Endothelial cell of umbilical vein (primary cell): ENCODE measurements at regions of chr2 and their contacts with region 1.

Region 1: GRCh38 chr2:30711646-30712085 is 95.6 kb downstream of the CAPN13 start:
- DNase-seq: peak; percentile 88
- H3K4me3 ChIP-seq: no peak overlapping the region
- H3K27ac ChIP-seq: no peak overlapping the region
- H3K4me1 ChIP-seq: no peaks in the 10 kb centered on the region
- H3K27me3 ChIP-seq: no peaks in the 10 kb centered on the region
- CTCF ChIP-seq: peak; percentile 99 to 100
- POLR2A ChIP-seq: no peak

Region 2: DNA sequence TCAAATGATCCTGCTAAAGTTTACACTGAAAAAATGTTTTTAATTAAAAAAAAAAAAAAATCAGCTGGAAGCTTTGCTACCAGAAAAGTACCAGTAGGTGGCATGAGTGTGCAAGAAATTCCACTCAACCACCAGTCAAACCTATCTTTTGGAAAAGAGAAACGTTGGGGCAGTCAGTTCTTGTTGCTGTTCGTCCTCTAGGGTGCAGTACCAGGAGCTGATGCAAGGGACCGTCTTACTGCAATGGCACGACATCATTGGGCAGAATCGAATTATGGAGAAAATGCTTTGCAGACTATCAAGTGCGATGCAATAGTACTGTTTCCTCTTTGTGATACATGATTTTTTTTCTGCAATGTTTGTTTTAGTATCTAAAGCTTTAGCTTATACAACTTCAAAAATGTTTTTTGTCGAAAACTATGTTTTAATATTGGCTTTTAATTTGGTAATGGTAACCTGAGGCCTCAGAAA is 546.6 kb before region 1 on chr2:
- CTCF ChIA-PET with region 1: interaction called, 542 read pairs
- POLR2A ChIA-PET with region 1: interaction called, 6 read pairs
- dilution Hi-C with region 1: no loop called
- intact Hi-C with region 1: loop called (anchors 1 kb)
- DNase-seq: peak; percentile 87
- H3K4me3 ChIP-seq: no peak overlapping the region
- H3K27ac ChIP-seq: no peak overlapping the region
- H3K4me1 ChIP-seq: no peaks in the 10 kb centered on the region
- H3K27me3 ChIP-seq: peaks cover 0 to 1% of the 10 kb centered on the region in 2 experiments
- CTCF ChIP-seq: peak; percentile 75 to 82
- POLR2A ChIP-seq: no peak

Region 3: GRCh38 chr2:30231212-30231995 is 480.3 kb before region 1 on chr2 and contains the start of gene LBH:
- CTCF ChIA-PET with region 1: interaction called, 11 read pairs
- POLR2A ChIA-PET with region 1: no interaction called
- dilution Hi-C with region 1: no loop called
- intact Hi-C with region 1: no loop called
- DNase-seq: peak; percentile 72
- H3K4me3 ChIP-seq: peak within 1 kb of the TSS; percentile 51 to 58 (median 53)
- H3K27ac ChIP-seq: no peak within 1 kb of the TSS
- H3K4me1 ChIP-seq: peaks cover 9% of the 10 kb centered on the region
- H3K27me3 ChIP-seq: peaks cover 21 to 22% of the 10 kb centered on the region in 2 experiments
- CTCF ChIP-seq: peak in 1 of 2 donors; percentile 3
- POLR2A ChIP-seq: peak; percentile 86
- total RNA-seq, gene LBH: 2.9 and 5.5 TPM in 2 replicates

Region 4: GRCh38 chr2:30721668-30722647 is 10.3 kb after region 1 on chr2:
- CTCF ChIA-PET with region 1: interaction called, 18 read pairs
- POLR2A ChIA-PET with region 1: no interaction called
- dilution Hi-C with region 1: no loop called
- intact Hi-C with region 1: no loop called
- DNase-seq: no peak
- H3K4me3 ChIP-seq: no peak overlapping the region
- H3K27ac ChIP-seq: no peak overlapping the region
- H3K4me1 ChIP-seq: no peaks in the 10 kb centered on the region
- H3K27me3 ChIP-seq: no peaks in the 10 kb centered on the region
- CTCF ChIP-seq: no peak
- POLR2A ChIP-seq: no peak

Region 5: GRCh38 chr2:31233741-31234682 is 522.3 kb after region 1 on chr2 and contains the start of gene EHD3:
- CTCF ChIA-PET with region 1: interaction called, 3 read pairs
- POLR2A ChIA-PET with region 1: no interaction called
- dilution Hi-C with region 1: no loop called
- intact Hi-C with region 1: loop called (anchors 5 kb)
- DNase-seq: peak; percentile 82
- H3K4me3 ChIP-seq: peak within 1 kb of the TSS; percentile 3 to 62 (median 40)
- H3K27ac ChIP-seq: no peak within 1 kb of the TSS
- H3K4me1 ChIP-seq: peaks cover 4% of the 10 kb centered on the region
- H3K27me3 ChIP-seq: peaks cover 6 to 12% of the 10 kb centered on the region in 2 experiments
- CTCF ChIP-seq: peak; percentile 43 to 63
- POLR2A ChIP-seq: peak; percentile 28
- total RNA-seq, gene EHD3: 10.7 and 12.1 TPM in 2 replicates